Right cardiac atrium (tissue), 5 donors: ENCODE measurements at regions of chr16 and their contacts with region 1.

Region 1: DNA sequence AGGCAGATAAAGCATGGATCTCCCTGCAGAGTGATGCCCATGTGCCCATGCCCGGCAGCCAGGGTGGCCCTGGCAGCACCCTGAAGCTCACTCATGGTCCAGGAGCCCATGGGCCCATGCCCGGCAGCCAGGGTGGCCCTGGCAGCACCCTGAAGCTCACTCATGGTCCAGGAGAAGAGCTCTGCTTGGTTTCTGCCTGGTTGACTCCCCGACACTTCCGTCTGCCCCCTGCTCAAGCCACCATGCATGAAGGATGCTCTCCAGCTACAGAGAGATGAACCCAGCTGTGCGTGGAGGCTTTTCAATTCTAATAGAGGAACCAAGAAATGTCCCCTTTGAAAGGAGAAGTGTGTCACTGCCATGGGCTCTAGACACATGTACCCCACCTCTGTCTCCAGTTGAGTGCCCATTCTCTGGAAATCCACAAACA is 8.7 kb downstream of the CCL17 start:
- DNase-seq: no peak
- ATAC-seq: no peak
- H3K4me3 ChIP-seq: no peak overlapping the region
- H3K27ac ChIP-seq: no peak overlapping the region
- H3K4me1 ChIP-seq: no peaks in the 10 kb centered on the region
- H3K27me3 ChIP-seq: no peaks in the 10 kb centered on the region

Region 2: DNA sequence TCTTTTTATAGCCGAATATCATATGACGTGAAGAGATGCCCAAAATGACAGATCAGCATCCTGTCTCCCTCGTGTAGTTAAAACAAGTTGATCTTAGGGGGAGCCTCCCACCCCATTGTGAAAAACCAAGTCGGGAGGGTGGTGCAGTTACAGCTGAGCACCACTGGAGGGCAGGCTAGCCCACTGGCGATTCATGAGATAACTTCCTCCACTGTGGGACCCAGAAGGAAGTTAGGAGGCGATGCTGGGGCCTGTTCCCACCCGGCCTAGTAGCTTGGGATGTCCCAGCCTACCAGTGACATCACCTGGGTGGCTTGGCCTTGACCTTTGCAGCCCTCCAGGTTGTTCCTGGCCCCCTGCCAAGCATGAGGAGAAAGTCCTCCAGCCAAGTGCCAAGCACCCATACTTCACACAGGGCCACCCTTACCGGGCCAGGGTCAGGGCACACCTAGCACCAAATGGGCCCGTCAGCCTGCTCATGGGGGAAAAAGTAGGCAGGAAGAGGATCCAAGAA is 329.0 kb before region 1 on chr16:
- intact Hi-C with region 1: loop called (anchors 10 kb)
- DNase-seq: peak; percentile 63 to 83 (median 83)
- ATAC-seq: peak; percentile 75 to 81
- H3K4me3 ChIP-seq: no peak overlapping the region
- H3K27ac ChIP-seq: no peak overlapping the region
- H3K4me1 ChIP-seq: no peaks in the 10 kb centered on the region
- H3K27me3 ChIP-seq: no peaks in the 10 kb centered on the region

Region 3: DNA sequence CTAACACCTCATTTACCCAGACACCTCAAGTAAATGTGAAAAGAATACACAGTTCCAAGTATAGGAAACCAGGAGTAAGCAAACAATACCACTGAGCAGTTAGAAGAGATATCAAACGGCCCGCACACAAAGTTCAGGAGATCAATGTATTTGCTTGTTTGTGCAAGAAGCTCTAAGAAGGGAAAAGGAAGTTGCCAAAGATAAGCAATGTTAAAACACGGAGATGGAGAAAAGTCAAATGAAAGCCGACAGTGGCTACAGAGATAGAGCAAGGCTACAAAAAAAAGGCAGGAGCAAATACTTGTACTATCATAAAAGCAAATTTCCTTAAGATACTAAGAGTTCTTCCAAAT is 257.0 kb before region 1 on chr16:
- intact Hi-C with region 1: no loop called
- DNase-seq: no peak
- ATAC-seq: peak in 1 of 2 donors; percentile 59
- H3K4me3 ChIP-seq: no peak overlapping the region
- H3K27ac ChIP-seq: no peak overlapping the region
- H3K4me1 ChIP-seq: no peaks in the 10 kb centered on the region
- H3K27me3 ChIP-seq: no peaks in the 10 kb centered on the region